ENCODE measurements at regions of chr14 and their contacts with region 1.

Region 1: GRCh38 chr14:63624203-63624602 is 17.5 kb downstream of the WDR89 start:
- DNase-seq: no peak
- H3K4me3 ChIP-seq: no peak overlapping the region
- H3K27ac ChIP-seq: no peak overlapping the region
- H3K4me1 ChIP-seq: no peaks in the 10 kb centered on the region
- H3K27me3 ChIP-seq: no peaks in the 10 kb centered on the region
- CTCF ChIP-seq: no peak
- POLR2A ChIP-seq: no peak

Region 2: GRCh38 chr14:63551332-63551731 is 72.9 kb before region 1 on chr14:
- intact Hi-C with region 1: loop called (anchors 5 kb)
- DNase-seq: no peak
- H3K4me3 ChIP-seq: no peak overlapping the region
- H3K27ac ChIP-seq: no peak overlapping the region
- H3K4me1 ChIP-seq: no peaks in the 10 kb centered on the region
- H3K27me3 ChIP-seq: no peaks in the 10 kb centered on the region
- CTCF ChIP-seq: no peak
- POLR2A ChIP-seq: no peak

Measured in testis (tissue), 5 donors.